ENCODE measurements at regions of chr2 and their contacts with region 1.

Region 1: GRCh38 chr2:17719562-17720371 is 33.8 kb downstream of the SMC6 start:
- DNase-seq: no peak
- H3K4me3 ChIP-seq: no peak overlapping the region
- H3K4me3 Mint-ChIP-seq: no peak overlapping the region
- H3K27ac Mint-ChIP-seq: no peak overlapping the region
- H3K4me1 ChIP-seq: peaks cover 6% of the 10 kb centered on the region; the same call in 1 of the 2 replicates
- H3K4me1 Mint-ChIP-seq: peaks cover 7% of the 10 kb centered on the region
- H3K27me3 ChIP-seq: no peaks in the 10 kb centered on the region
- H3K27me3 Mint-ChIP-seq: no peaks in the 10 kb centered on the region
- CTCF ChIP-seq: peak; percentile 77 to 78

Region 2: GRCh38 chr2:17672583-17673317 is 47.0 kb before region 1 on chr2:
- CTCF ChIA-PET with region 1: no interaction called
- POLR2A ChIA-PET with region 1: no interaction called
- intact Hi-C with region 1: no loop called
- DNase-seq: no peak
- H3K4me3 ChIP-seq: no peak overlapping the region
- H3K4me3 Mint-ChIP-seq: no peak overlapping the region
- H3K27ac Mint-ChIP-seq: no peak overlapping the region
- H3K4me1 ChIP-seq: no peaks in the 10 kb centered on the region
- H3K4me1 Mint-ChIP-seq: no peaks in the 10 kb centered on the region
- H3K27me3 ChIP-seq: no peaks in the 10 kb centered on the region
- H3K27me3 Mint-ChIP-seq: no peaks in the 10 kb centered on the region
- CTCF ChIP-seq: no peak

Region 3: GRCh38 chr2:17733599-17733998 is 13.8 kb after region 1 on chr2:
- CTCF ChIA-PET with region 1: no interaction called
- POLR2A ChIA-PET with region 1: no interaction called
- intact Hi-C with region 1: loop called (anchors 2 kb)
- DNase-seq: no peak
- H3K4me3 ChIP-seq: no peak overlapping the region
- H3K4me3 Mint-ChIP-seq: no peak overlapping the region
- H3K27ac Mint-ChIP-seq: no peak overlapping the region
- H3K4me1 ChIP-seq: no peaks in the 10 kb centered on the region
- H3K4me1 Mint-ChIP-seq: no peaks in the 10 kb centered on the region
- H3K27me3 ChIP-seq: no peaks in the 10 kb centered on the region
- H3K27me3 Mint-ChIP-seq: no peaks in the 10 kb centered on the region
- CTCF ChIP-seq: no peak

Region 4: DNA sequence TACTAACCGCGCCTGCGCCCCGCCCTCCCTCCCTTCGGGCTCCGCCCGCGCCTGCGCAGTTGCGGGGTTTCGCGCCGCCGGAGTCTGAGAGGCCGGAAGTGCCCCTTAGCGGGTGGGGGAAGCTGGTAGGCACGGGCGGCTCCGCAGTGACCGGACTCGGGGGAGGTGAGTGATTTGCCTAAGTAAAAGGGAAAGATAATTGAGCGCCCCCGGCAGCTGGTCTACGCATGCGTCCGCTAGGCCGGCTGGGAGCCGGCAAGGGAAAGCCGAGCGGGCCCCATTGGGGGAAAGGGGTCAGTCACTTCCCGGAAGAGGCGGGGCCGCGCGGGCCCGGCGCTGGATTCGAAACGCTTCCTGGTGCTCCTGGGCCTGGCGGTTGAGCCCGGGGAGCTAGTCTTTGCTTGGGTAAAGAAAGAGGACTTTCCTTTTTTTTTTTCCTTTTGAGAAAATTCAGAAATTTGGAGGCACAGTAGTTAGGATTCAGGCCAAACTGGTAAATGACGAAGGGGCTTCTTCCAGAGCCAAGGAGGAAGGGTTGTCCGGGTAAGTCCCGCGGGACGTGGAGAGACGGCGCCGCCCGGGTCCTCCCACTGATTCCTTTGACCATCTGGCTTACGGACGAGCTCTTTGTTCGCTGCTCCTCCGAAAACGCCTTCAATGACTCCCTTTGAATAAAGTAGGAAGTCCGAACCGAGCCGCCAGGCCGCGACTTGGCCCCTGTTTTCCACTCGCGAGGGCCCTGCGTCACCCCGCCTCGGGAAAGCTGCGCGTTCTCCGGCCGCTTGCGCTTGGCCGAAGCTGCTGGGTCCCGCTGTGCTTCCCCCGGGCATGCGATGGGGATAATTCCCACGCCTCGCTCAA is 34.3 kb after region 1 on chr2 and contains the starts of genes GEN1 and SMC6:
- CTCF ChIA-PET with region 1: no interaction called
- POLR2A ChIA-PET with region 1: interaction called, 5 read pairs
- intact Hi-C with region 1: loop called (anchors 2 kb)
- DNase-seq: peak; percentile 94 to 95
- H3K4me3 ChIP-seq: peak within 1 kb of the TSS; percentile 97
- H3K4me3 Mint-ChIP-seq: peak within 1 kb of the TSS; percentile 92
- H3K27ac Mint-ChIP-seq: peak within 1 kb of the TSS; percentile 99
- H3K4me1 ChIP-seq: peaks cover 10% of the 10 kb centered on the region
- H3K4me1 Mint-ChIP-seq: no peaks in the 10 kb centered on the region
- H3K27me3 ChIP-seq: no peaks in the 10 kb centered on the region
- H3K27me3 Mint-ChIP-seq: no peaks in the 10 kb centered on the region
- CTCF ChIP-seq: no peak
- total RNA-seq, gene GEN1: 33.3 and 36.5 TPM in 2 replicates
- total RNA-seq, gene SMC6: 39.4 and 41.3 TPM in 2 replicates

Region 5: DNA sequence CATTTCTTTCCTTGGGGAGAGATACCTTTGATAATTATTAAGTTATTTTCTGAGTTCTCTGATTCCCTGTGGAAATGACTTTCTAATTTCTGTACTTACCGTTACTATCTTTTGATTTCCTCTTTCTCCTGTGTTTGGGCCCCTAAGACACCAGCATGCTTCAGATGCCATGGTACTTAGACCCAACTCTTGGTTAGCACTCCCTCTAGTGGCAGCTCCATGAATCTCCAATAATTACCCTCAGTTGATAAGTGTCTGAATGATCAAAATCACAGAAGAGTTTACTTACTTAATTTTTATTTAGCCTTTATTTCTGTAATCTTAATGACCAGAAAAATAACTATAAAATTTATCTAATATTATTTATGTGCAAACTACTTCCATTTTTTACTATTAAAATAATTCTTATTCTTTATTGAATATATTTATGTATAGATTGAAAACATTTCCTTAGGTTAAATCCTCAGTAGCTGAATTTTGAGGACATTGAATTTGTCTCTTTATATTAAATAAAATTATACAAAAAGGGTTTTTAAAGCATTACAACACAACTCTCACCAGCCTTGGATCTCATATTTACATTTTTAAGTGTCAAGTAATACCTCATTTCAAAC is 459.1 kb after region 1 on chr2:
- CTCF ChIA-PET with region 1: no interaction called
- POLR2A ChIA-PET with region 1: no interaction called
- intact Hi-C with region 1: loop called (anchors 10 kb)
- DNase-seq: peak in 1 of 2 experiments; percentile 59
- H3K4me3 ChIP-seq: no peak overlapping the region
- H3K4me3 Mint-ChIP-seq: no peak overlapping the region
- H3K27ac Mint-ChIP-seq: no peak overlapping the region
- H3K4me1 ChIP-seq: no peaks in the 10 kb centered on the region
- H3K4me1 Mint-ChIP-seq: peaks cover 14% of the 10 kb centered on the region
- H3K27me3 ChIP-seq: no peaks in the 10 kb centered on the region
- H3K27me3 Mint-ChIP-seq: peaks cover 2% of the 10 kb centered on the region
- CTCF ChIP-seq: peak; percentile 76 to 80